ENCODE measurements at regions of chr3 and their contacts with region 1.

Region 1: GRCh38 chr3:52444860-52445793 is at the start of gene SEMA3G:
- DNase-seq: no peak
- H3K4me3 ChIP-seq: no peak within 1 kb of the TSS
- H3K27me3 ChIP-seq: no peaks in the 10 kb centered on the region
- CTCF ChIP-seq: peak; percentile 55
- polyA plus RNA-seq, gene SEMA3G: not detected in 2 replicates

Region 2: DNA sequence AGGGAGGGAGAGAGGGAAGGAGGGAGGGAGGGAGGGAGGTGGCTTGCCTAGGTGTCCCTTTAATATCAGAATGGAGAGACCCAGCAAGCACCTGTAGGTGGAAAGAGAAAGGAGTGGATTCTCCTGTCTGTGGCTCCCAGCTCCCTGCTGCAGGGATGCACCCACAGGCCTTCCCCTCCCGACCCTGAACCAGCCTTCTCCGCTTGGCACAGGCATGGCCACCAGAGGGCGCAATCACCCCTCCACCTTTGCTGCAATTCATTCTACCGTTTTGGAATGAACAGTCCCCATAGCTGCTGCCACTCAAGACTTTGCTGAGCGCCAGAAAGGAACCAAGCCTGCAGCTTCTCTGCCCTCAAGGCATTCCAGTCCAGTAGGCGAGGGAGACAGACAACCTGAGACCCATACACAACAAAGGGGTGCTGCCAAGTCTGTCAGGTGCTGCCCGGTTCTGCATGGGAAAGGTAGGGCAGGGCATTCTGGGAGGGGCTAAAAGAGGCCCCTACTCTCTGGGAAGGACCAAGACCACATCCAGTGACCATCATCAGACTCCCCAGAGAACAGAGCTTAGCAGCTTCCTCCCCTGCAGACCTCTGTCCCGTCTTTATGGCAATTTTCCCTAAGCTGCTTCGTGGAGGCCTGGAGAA is 224.6 kb before region 1 on chr3:
- CTCF ChIA-PET with region 1: interaction called, 11 read pairs
- POLR2A ChIA-PET with region 1: no interaction called
- DNase-seq: no peak
- H3K4me3 ChIP-seq: no peak overlapping the region
- H3K27me3 ChIP-seq: no peaks in the 10 kb centered on the region
- CTCF ChIP-seq: peak; percentile 97

Region 3: GRCh38 chr3:52423173-52423572 is 22.0 kb before region 1 on chr3:
- CTCF ChIA-PET with region 1: interaction called, 445 read pairs
- POLR2A ChIA-PET with region 1: no interaction called
- DNase-seq: no peak
- H3K4me3 ChIP-seq: no peak overlapping the region
- H3K27me3 ChIP-seq: no peaks in the 10 kb centered on the region
- CTCF ChIP-seq: no peak

Region 4: DNA sequence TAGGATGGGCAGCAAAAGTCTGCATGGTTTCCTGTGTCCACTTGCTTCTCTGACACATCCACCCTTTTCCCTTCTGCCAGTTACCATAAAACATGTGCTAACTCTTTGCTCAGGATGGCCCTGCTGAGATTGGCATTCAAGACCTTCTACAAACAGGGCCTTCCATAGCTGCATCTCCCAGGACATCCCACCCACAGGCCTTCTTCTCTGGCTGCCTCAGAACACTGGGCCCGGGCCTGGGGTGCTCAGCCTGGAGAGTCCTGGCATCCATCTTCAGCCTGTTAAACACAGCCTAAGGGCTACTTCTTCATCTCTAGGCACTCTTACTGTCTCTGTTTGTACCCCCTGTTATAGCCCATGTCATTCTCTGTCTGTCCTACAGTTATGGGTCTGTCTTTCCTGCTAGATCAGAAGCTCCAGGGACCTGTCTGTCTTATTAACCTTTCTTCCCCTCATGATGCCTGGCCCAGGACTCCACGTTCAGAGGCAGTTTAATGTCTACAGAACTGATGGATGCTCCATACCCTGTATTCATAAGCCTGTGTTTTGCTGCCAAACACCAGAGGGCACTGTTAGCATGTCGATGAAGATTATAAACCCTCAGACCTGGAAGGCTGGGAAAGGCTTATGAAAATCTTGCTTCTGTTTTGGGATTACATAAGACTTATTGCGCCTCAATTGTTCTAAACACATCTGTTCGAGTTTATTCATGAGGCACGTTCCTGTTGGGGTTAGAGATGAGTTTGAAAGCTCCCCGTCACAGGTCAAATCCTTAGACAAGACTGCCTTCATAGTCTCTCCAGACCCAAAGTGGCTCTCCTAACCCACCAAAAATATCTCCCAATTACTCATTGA is 16.7 kb before region 1 on chr3:
- CTCF ChIA-PET with region 1: interaction called, 445 read pairs
- POLR2A ChIA-PET with region 1: no interaction called
- DNase-seq: peak; percentile 43
- H3K4me3 ChIP-seq: no peak overlapping the region
- H3K27me3 ChIP-seq: no peaks in the 10 kb centered on the region
- CTCF ChIP-seq: peak; percentile 83

Region 5: GRCh38 chr3:52455283-52456168 is 10.4 kb after region 1 on chr3 and contains the start of gene NISCH:
- CTCF ChIA-PET with region 1: interaction called, 31 read pairs
- POLR2A ChIA-PET with region 1: no interaction called
- DNase-seq: no peak
- H3K4me3 ChIP-seq: peak within 1 kb of the TSS; percentile 95
- H3K27me3 ChIP-seq: no peaks in the 10 kb centered on the region
- CTCF ChIP-seq: no peak
- polyA plus RNA-seq, gene NISCH: 66.4 and 95.3 TPM in 2 replicates